ENCODE measurements at regions of chr6 and their contacts with region 1.

Region 1: DNA sequence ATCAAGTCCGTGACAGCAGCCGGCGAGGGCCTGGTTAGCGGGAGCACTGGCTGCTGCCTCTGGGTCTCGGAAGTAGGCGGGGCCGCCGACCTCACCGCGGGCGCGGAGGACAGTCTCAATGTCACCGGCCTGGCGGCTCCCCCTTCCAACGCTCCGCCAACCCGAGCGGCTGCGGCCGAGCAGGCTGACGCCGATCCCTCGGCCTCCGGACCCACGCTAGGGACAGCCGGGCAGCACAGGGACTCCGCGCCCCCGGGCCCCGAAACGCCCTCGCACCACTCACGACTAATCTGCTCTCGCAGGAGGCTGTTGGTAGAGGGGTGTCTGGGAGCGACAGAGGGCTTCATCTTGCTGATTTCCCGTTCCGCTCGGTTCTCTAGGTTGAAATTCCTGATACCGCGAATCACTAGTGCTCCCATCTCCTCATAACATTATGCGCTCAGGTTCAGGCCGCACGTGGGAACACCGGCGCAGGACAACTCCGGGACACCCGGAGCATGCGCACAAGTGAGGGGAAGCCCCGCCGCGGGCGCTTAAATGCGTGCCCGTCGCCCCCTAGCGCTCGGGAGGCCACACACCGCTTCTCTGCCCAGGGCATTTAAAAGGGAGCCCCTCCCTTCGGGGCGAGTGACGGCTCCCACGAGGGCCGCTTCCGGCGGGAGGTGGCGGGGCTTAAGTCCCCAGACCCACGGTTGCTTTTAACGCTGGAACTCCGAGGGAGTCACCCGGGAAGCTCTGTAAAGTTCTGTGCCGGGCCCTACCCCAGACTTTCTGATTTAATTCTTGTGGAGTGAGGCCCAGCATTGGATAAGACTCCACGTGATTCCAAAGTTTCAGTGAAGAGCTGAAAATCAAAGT is at the start of gene NDUFAF4:
- DNase-seq: peak; percentile 96
- ATAC-seq: peak; percentile 94
- H3K4me3 Mint-ChIP-seq: peak within 1 kb of the TSS; percentile 84
- H3K27ac Mint-ChIP-seq: peak within 1 kb of the TSS; percentile 95
- H3K4me1 Mint-ChIP-seq: peaks cover 17% of the 10 kb centered on the region
- H3K27me3 Mint-ChIP-seq: no peaks in the 10 kb centered on the region
- CTCF ChIP-seq: peak; percentile 89
- total RNA-seq, gene NDUFAF4: 59.2 to 75.8 TPM (median 66.3 TPM) in 3 replicates

Region 2: GRCh38 chr6:96911751-96912150 is 14.1 kb after region 1 on chr6:
- CTCF ChIA-PET with region 1: interaction called, 14 read pairs
- POLR2A ChIA-PET with region 1: no interaction called
- DNase-seq: no peak
- ATAC-seq: peak; percentile 18; the same call in 1 of the 2 replicates
- H3K4me3 Mint-ChIP-seq: no peak overlapping the region
- H3K27ac Mint-ChIP-seq: no peak overlapping the region
- H3K4me1 Mint-ChIP-seq: peaks cover 12% of the 10 kb centered on the region
- H3K27me3 Mint-ChIP-seq: peaks cover 4% of the 10 kb centered on the region
- CTCF ChIP-seq: no peak

Region 3: DNA sequence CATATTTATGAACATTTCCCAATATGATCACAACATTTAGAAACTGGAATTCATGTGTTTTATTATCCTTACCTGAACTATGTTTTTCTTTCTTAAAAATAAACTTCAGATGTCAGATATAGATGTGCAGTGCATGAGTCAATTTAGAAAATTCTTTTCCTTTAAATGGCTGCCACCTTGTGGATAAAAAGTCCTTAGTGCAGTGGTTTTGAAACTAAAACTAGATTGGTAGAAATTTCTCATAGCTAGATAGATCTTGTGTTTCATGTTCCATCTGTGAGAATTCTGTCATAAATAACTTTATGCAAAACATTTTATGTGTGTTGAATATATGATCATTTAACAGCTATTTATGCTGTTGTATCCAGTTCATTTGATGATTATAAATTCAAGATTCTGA is 161.9 kb after region 1 on chr6:
- CTCF ChIA-PET with region 1: interaction called, 42 read pairs
- POLR2A ChIA-PET with region 1: no interaction called
- DNase-seq: no peak
- ATAC-seq: no peak
- H3K4me3 Mint-ChIP-seq: no peak overlapping the region
- H3K27ac Mint-ChIP-seq: no peak overlapping the region
- H3K4me1 Mint-ChIP-seq: peaks cover 3% of the 10 kb centered on the region; the same call in 1 of the 2 replicates
- H3K27me3 Mint-ChIP-seq: no peaks in the 10 kb centered on the region; the same call in 1 of the 2 replicates
- CTCF ChIP-seq: no peak

Measured in WTC11 (cell line).